GM10248 (cell line): ENCODE measurements at regions of chr3 and their contacts with region 1.

Region 1: DNA sequence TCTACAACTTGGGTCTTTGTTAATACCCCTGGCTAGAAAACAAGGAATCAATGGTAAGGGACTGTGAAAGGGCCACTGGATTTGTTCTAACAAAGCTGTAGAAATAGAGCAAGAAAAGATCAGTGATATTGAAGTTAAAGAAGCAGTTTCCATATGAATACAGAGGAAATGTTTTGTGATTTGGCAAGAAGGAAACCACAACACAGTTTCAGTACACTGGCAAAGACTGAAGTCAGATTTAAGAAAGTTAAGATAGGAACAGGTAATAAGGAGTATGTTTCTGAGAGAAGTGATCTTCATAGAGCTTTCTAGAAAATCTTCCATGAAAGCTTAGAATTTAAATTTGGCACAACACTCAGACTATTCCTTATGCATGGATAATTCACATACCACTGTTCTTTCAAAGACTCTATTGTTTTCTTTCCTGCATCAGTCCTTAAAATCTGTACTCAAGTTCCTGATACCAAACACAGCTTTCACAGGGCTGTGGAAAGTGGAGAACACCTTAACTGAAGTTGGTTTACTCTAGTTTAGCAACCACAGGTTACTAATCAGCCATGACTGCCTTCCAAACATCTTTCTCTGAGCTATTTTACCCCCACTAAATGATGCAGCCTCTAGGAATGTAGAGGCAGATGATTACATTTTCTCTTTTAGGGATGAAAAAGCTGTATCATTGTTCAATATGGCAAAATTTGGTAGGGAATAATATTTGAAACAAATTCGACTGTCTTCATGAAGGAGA is 32.4 kb upstream of the ALCAM start:
- DNase-seq: no peak
- CTCF ChIP-seq: no peak

Region 2: DNA sequence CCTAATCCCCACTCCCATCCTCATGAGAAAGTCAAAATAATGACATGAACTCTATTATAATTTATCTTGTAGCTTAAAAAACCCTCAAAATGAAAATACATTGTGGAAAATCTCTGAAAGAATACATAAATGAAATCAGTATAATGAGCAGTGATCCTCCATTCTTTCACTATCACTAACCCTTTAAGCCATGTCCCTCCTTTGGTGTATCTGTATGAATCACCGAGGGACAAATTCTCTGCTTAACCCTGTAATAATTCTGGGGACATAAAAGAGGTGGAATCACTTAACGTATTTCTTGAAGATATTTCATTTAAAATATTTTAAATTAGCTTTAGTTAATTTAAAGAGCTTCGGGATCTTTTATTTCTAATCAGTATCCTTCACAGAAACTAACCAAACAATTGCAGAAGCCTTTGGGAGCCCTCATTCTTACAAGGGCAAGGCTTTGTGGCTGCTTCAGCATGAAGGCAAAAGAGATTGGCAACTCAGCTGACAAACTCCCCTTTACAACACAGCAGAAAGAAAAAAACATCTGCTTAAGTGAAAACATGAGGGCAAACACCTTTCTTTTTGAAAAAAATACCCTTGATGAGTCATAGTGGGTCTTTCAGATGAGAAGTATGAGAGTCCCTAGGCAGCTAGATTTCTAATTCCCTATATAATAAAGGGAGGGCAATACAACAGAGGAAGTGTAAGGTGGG is 11.6 kb before region 1 on chr3:
- CTCF ChIA-PET with region 1: interaction called, 17 read pairs
- POLR2A ChIA-PET with region 1: interaction called, 5 read pairs
- DNase-seq: peak; percentile 29
- CTCF ChIP-seq: no peak